Naive thymus-derived CD8-positive, alpha-beta T cell (primary cell): ENCODE measurements at regions of chr14 and their contacts with region 1.

Region 1: GRCh38 chr14:105527661-105528581 is 1.5 kb downstream of the TMEM121 start:
- DNase-seq: peak; percentile 61 to 85 (median 80)
- ATAC-seq: peak; percentile 70 to 76
- H3K4me3 Mint-ChIP-seq: peak overlapping the region; percentile 59 to 88 (median 76)
- H3K27ac Mint-ChIP-seq: peak overlapping the region in 4 of 10 donors; percentile 8 to 59 (median 35)
- H3K4me1 Mint-ChIP-seq: peaks cover 5 to 35% (median 28%) of the 10 kb centered on the region in 4 donors
- H3K27me3 Mint-ChIP-seq: peaks cover 0 to 11% (median 7%) of the 10 kb centered on the region in 5 donors

Region 2: GRCh38 chr14:105480952-105481801 is 46.7 kb before region 1 on chr14:
- POLR2A ChIA-PET with region 1: interaction called, 13 read pairs
- DNase-seq: peak; percentile 84 to 97 (median 92)
- ATAC-seq: peak; percentile 30 to 47
- H3K4me3 Mint-ChIP-seq: peak overlapping the region; percentile 74 to 89 (median 84)
- H3K27ac Mint-ChIP-seq: peak overlapping the region; percentile 96 to 100 (median 100)
- H3K4me1 Mint-ChIP-seq: peaks cover 32 to 78% (median 65%) of the 10 kb centered on the region in 4 donors
- H3K27me3 Mint-ChIP-seq: peaks cover 0 to 8% (median 0%) of the 10 kb centered on the region in 5 donors

Region 3: GRCh38 chr14:105549481-105549880 is 21.6 kb after region 1 on chr14:
- POLR2A ChIA-PET with region 1: no interaction called
- DNase-seq: no peak
- ATAC-seq: no peak
- H3K4me3 Mint-ChIP-seq: no peak overlapping the region
- H3K27ac Mint-ChIP-seq: no peak overlapping the region
- H3K4me1 Mint-ChIP-seq: no peaks in the 10 kb centered on the region
- H3K27me3 Mint-ChIP-seq: peaks cover 0 to 10% (median 6%) of the 10 kb centered on the region in 5 donors

Region 4: GRCh38 chr14:105682940-105683570 is 155.1 kb after region 1 on chr14:
- POLR2A ChIA-PET with region 1: no interaction called
- DNase-seq: peak in 1 of 10 donors; percentile 52
- ATAC-seq: no peak
- H3K4me3 Mint-ChIP-seq: peak overlapping the region in 1 of 10 donors; percentile 39
- H3K27ac Mint-ChIP-seq: peak overlapping the region in 3 of 10 donors; percentile 19 to 79 (median 48)
- H3K4me1 Mint-ChIP-seq: peaks cover 0 to 15% (median 4%) of the 10 kb centered on the region in 4 donors
- H3K27me3 Mint-ChIP-seq: no peaks in the 10 kb centered on the region